Posterior vena cava (tissue), 2 donors: ENCODE measurements at regions of chr22 and their contacts with region 1.

Region 1: GRCh38 chr22:31477329-31477728 is 12.3 kb downstream of the EIF4ENIF1 start:
- DNase-seq: no peak

Region 2: DNA sequence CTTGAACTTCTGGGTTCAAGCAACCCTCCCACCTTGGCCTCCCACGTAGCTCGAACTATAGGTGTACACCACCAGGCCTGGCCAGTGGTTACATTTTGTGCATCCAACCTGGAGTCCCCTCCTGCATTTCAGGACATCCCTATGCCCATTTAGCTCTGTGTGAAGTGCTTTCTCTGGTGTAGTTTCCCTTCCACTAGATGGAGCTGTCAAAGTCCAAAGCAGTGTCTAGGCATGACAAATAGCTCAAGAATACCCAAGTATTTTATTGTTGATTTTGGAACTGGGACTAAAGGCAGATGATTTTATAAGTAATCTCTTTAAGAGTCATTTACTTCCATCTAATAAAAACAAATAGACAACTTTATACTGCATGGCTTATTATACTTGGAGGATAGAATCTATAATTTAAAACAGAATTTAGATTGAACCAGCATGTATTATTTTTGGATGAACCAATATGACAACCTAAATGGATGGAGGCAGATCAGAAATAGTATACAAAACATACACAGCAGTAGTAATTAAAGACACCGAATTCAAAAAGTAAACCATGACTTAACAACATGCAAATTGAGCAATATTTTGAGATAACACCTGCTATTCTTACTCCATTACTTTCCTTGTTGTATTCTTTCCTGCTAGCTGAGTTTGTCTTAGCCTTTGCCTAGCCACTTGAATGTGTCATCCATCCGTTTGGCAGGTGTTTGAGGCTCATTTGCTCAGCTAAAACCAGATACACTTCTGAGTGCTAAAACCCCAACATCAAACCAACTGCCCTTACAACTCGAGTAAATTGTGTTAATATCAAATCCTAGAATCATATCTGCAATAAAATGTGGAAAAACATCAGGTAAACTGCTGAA is 25.4 kb before region 1 on chr22:
- intact Hi-C with region 1: loop called in 1 of 2 experiments (anchors 1 kb)
- DNase-seq: no peak

Region 3: DNA sequence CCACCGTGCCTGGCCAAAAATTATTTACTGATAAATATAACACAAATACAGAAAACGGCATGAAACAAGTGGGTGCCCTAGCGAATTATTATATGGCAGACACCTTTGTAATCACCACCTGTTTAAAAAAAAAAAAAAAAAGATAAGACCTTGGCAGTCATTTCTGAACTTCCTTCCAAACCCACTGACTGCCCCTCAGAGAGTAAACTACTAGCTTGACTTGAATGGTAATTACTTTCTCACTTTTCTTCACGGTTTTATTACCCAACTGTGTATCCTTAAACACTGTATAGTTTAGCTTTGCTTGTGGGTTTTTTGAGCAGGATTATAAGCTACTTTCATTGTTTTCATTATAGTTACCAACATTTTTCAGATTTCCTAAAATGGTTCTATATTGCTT is 42.7 kb after region 1 on chr22:
- intact Hi-C with region 1: no loop called
- DNase-seq: no peak